Activated CD8-positive, alpha-beta T cell treated with anti-CD3 and anti-CD28 coated beads, Interleukin-2, amount 10 ng/mL, durations not matched to agents 7 days and 5 days (primary cell): ENCODE measurements at regions of chr3 and their contacts with region 1.

Region 1: GRCh38 chr3:43286115-43286840 is at the start of gene SNRK:
- DNase-seq: peak; percentile 91
- ATAC-seq: peak; percentile 77
- H3K4me3 Mint-ChIP-seq: peak within 1 kb of the TSS; percentile 92
- H3K27ac Mint-ChIP-seq: peak within 1 kb of the TSS; percentile 98
- H3K4me1 Mint-ChIP-seq: peaks cover 33% of the 10 kb centered on the region
- H3K27me3 Mint-ChIP-seq: peaks cover 5% of the 10 kb centered on the region
- total RNA-seq, gene SNRK: 55.5 to 55.7 TPM

Region 2: GRCh38 chr3:43180027-43180426 is 106.3 kb before region 1 on chr3:
- CTCF ChIA-PET with region 1: interaction called, 4 read pairs
- POLR2A ChIA-PET with region 1: interaction called, 16 read pairs
- DNase-seq: peak; percentile 73
- ATAC-seq: peak; percentile 95
- H3K4me3 Mint-ChIP-seq: peak overlapping the region; percentile 64
- H3K27ac Mint-ChIP-seq: peak overlapping the region; percentile 93
- H3K4me1 Mint-ChIP-seq: peaks cover 46% of the 10 kb centered on the region
- H3K27me3 Mint-ChIP-seq: no peaks in the 10 kb centered on the region

Region 3: GRCh38 chr3:43296565-43296964 is 10.3 kb after region 1 on chr3:
- CTCF ChIA-PET with region 1: interaction called, 18 read pairs
- POLR2A ChIA-PET with region 1: interaction called, 75 read pairs
- DNase-seq: peak; percentile 80
- ATAC-seq: peak; percentile 94
- H3K4me3 Mint-ChIP-seq: peak overlapping the region; percentile 79
- H3K27ac Mint-ChIP-seq: peak overlapping the region; percentile 92
- H3K4me1 Mint-ChIP-seq: peaks cover 78% of the 10 kb centered on the region
- H3K27me3 Mint-ChIP-seq: no peaks in the 10 kb centered on the region

Region 4: DNA sequence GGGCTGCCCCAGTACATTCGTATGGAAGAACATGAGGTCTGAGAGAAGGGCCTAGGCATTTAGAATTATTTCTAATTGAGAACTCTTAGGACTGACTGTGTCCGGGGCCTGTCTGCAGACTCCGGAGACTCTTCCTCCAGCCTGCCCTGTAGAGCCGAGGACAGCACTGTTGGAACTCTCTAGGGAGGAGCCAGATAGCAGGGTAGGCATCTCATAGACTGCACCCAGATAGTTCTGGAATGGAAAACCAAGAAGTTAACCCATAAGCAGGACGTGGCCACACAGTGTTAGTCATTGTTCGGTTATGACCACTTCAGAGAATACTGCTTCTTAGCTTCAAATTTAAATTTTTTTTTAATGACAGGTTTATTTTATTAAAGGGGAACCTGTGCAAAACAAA is 59.6 kb after region 1 on chr3:
- CTCF ChIA-PET with region 1: interaction called, 8 read pairs
- POLR2A ChIA-PET with region 1: interaction called, 23 read pairs
- DNase-seq: peak; percentile 55
- ATAC-seq: peak; percentile 56
- H3K4me3 Mint-ChIP-seq: peak overlapping the region; percentile 43
- H3K27ac Mint-ChIP-seq: peak overlapping the region; percentile 97
- H3K4me1 Mint-ChIP-seq: peaks cover 77% of the 10 kb centered on the region
- H3K27me3 Mint-ChIP-seq: no peaks in the 10 kb centered on the region